ENCODE measurements at regions of chr1 and their contacts with region 1.

Region 1: GRCh38 chr1:44417351-44418021 is 12.4 kb downstream of the RNF220 start:
- DNase-seq: peak; percentile 60
- H3K4me3 Mint-ChIP-seq: peak overlapping the region; percentile 18
- H3K27ac Mint-ChIP-seq: no peak overlapping the region
- H3K4me1 Mint-ChIP-seq: no peaks in the 10 kb centered on the region
- H3K27me3 Mint-ChIP-seq: peaks cover 59% of the 10 kb centered on the region

Region 2: DNA sequence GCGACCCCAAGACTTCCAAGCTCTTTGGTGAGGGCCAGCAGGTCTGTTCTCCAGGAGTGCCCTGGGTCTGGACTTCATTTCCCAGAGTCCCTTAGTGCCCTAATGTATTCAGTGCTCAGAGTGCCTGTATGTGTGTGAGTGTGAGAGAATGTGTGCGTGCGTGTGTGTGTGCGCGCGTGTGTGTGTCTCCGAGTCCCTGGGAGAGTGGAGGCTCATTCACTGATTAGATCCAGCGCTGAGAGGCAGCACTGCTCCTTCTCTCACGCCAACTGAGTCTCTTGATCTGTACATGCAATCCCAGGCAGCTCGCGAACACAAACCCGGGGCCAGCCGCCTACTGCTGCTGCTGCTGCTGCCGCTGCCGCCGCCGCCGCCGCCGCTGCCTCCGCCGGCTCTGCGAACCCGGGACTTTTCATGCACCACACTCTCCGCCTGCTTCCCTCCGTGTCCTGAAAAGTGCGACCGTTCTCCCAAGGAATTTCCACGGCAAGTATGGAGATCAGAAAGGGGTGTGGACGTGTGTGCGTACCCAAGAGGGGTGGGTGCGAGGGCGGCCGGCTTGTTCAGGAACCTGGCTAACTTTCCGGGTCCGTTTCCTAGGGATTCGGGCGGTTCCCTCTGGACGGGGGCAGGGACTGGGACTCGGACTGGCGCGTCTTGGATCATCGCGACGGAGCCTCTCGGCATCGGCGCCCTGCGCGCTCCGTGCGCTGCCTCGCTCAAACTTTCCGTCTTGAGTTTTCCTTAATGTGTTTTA is 12.3 kb before region 1 on chr1 and contains the start of gene RNF220:
- intact Hi-C with region 1: loop called (anchors 1 kb)
- DNase-seq: peak; percentile 80
- H3K4me3 Mint-ChIP-seq: peak within 1 kb of the TSS; percentile 89
- H3K27ac Mint-ChIP-seq: peak within 1 kb of the TSS; percentile 35
- H3K4me1 Mint-ChIP-seq: peaks cover 22% of the 10 kb centered on the region
- H3K27me3 Mint-ChIP-seq: peaks cover 60% of the 10 kb centered on the region
- total RNA-seq, gene RNF220: 101 and 102 TPM in 2 replicates